ENCODE measurements at regions of chr1 and their contacts with region 1.

Region 1: GRCh38 chr1:171769171-171769570 is 12.3 kb upstream of the METTL13 start:
- DNase-seq: no peak
- H3K4me3 ChIP-seq: no peak overlapping the region
- H3K27ac ChIP-seq: no peak overlapping the region
- H3K4me1 ChIP-seq: no peaks in the 10 kb centered on the region
- H3K27me3 ChIP-seq: no peaks in the 10 kb centered on the region
- CTCF ChIP-seq: no peak
- POLR2A ChIP-seq: no peak

Region 2: GRCh38 chr1:171663854-171664575 is 105.2 kb before region 1 on chr1:
- intact Hi-C with region 1: loop called in 1 of 2 experiments (anchors 10 kb)
- DNase-seq: no peak
- H3K4me3 ChIP-seq: no peak overlapping the region
- H3K27ac ChIP-seq: peak overlapping the region in 1 of 5 donors; percentile 46
- H3K4me1 ChIP-seq: no peaks in the 10 kb centered on the region
- H3K27me3 ChIP-seq: no peaks in the 10 kb centered on the region
- CTCF ChIP-seq: no peak
- POLR2A ChIP-seq: no peak